ENCODE measurements at regions of chr20 and their contacts with region 1.

Region 1: DNA sequence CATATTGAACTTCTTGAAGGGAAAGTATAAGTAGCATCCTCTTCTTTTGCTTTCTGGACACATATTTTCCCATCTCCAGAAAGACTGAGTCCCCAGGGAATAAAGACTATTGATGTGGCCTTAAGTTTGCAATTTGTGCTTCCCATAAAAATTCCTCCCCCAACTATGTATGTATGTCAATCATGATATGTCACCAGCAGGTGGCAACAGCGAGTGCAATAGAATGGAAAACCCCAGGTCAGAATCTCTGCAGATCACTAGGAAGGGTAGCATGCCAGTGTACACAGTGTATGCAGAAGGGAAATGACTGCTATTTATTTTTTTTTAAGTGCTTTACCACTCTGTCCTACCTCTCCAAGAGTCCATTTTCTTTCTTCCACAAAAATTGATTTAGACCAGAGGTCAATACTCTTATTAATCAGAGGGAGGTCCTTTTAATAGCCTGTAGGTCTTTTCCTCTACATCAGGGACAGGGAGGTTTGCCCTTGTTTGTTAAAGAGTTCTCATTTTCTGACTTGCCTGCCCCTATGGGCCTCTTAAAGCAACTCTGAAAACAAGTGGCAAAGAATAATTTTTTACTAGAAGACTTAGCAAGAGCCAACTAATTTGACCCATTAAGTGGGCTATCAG is 61.4 kb downstream of the BMP2 start:
- DNase-seq: peak; percentile 15 to 65
- ATAC-seq: peak in 7 of 8 donors; percentile 43 to 85 (median 75)
- H3K4me3 ChIP-seq: no peak overlapping the region
- H3K27ac ChIP-seq: no peak overlapping the region
- H3K4me1 ChIP-seq: no peaks in the 10 kb centered on the region
- H3K27me3 ChIP-seq: no peaks in the 10 kb centered on the region
- CTCF ChIP-seq: peak; percentile 57 to 83 (median 72)

Region 2: DNA sequence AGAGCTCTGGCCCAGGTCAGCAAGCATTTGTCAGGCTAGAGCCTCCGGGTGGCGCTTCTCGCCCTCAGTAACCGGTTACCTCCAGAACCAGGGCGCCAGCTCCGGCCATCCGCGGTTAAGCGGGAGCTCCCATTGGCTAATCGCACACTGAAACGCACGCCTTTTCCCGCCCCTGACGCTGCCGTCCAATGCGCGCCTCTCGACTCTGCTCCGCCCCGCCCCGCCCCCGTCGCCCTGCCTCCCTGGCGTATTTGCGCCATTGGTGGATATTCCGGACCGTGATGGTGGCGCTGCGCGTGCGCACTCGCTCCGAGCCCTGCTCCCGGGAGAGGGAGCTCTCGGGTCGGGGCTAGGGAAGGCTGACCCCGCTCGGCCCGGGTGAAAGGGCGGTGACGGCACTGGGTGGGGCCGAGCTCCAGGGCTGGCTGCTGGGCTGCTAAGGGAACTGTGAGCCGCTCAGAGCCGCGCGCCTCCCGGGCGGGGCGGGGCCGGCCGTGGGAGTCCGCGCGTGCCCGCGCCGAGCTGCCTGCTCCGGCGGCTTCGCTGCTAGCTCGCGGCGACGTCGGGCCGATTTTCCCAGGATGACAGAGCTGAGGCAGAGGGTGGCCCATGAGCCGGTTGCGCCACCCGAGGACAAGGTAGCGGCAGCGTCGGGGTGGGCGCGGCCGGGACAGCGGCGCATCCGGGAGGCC is 1702.3 kb before region 1 on chr20 and contains the start of gene CDS2:
- intact Hi-C with region 1: no loop called
- DNase-seq: peak; percentile 100
- ATAC-seq: peak; percentile 97 to 99 (median 97)
- H3K4me3 ChIP-seq: peak within 1 kb of the TSS; percentile 83 to 98 (median 94)
- H3K27ac ChIP-seq: peak within 1 kb of the TSS; percentile 89 to 99 (median 98)
- H3K4me1 ChIP-seq: peaks cover 7 to 60% (median 48%) of the 10 kb centered on the region in 9 donors
- H3K27me3 ChIP-seq: no peaks in the 10 kb centered on the region
- CTCF ChIP-seq: peak; percentile 54 to 90 (median 71)
- total RNA-seq, gene CDS2: 67.5 to 100 (median 85.7) TPM

Region 3: DNA sequence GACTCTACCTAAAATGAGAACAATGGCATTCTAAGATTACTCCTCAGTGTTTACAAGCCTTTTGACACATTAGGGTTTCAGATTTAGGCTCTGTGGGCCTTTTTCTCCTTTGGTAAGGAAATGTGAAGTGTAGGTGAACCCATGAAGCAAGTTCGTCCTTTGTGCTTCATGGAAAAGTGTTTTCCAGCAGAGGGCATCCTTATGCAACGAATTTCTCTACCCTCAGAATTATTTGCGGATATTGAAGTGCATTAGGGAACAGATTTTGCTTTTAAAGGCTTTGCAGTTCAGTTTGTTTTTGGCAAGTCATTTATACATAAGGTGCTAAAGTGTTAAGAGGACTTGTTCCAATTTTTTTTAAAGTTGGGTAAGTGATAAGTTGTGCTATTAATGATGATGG is 650.4 kb before region 1 on chr20:
- intact Hi-C with region 1: loop called in 2 of 10 experiments (anchors 10 kb)
- DNase-seq: peak in 1 of 2 donors; percentile 8
- ATAC-seq: no peak
- H3K4me3 ChIP-seq: no peak overlapping the region
- H3K27ac ChIP-seq: no peak overlapping the region
- H3K4me1 ChIP-seq: no peaks in the 10 kb centered on the region
- H3K27me3 ChIP-seq: peaks cover 0 to 4% (median 0%) of the 10 kb centered on the region in 7 donors
- CTCF ChIP-seq: peak in 7 of 9 donors; percentile 30 to 64 (median 47)

Region 4: DNA sequence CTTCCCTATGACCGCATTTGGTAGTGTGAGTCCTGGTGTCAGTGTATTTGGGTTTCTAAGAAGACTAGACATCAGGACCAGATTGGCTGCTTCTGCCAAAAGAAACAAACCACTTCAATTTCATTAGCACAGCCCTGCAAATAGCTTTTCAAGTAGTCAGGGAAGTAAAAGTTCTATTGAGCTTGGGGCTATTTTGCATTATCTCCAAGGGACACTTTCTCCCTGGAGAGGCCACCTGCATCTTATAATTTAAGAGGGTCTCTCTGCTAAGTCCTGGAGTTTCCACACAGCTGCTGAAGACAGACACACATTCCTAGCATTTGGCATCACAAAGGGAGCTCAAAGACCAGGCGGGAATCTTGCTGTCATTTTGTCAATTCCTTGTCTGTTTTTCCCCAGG is 79.8 kb after region 1 on chr20:
- intact Hi-C with region 1: no loop called
- DNase-seq: no peak
- ATAC-seq: no peak
- H3K4me3 ChIP-seq: no peak overlapping the region
- H3K27ac ChIP-seq: no peak overlapping the region
- H3K4me1 ChIP-seq: no peaks in the 10 kb centered on the region
- H3K27me3 ChIP-seq: peaks cover 0 to 5% (median 0%) of the 10 kb centered on the region in 7 donors
- CTCF ChIP-seq: no peak

Region 5: GRCh38 chr20:7520361-7520760 is 691.5 kb after region 1 on chr20:
- intact Hi-C with region 1: no loop called
- DNase-seq: no peak
- ATAC-seq: no peak
- H3K4me3 ChIP-seq: no peak overlapping the region
- H3K27ac ChIP-seq: no peak overlapping the region
- H3K4me1 ChIP-seq: no peaks in the 10 kb centered on the region
- H3K27me3 ChIP-seq: no peaks in the 10 kb centered on the region
- CTCF ChIP-seq: no peak

Region 6: DNA sequence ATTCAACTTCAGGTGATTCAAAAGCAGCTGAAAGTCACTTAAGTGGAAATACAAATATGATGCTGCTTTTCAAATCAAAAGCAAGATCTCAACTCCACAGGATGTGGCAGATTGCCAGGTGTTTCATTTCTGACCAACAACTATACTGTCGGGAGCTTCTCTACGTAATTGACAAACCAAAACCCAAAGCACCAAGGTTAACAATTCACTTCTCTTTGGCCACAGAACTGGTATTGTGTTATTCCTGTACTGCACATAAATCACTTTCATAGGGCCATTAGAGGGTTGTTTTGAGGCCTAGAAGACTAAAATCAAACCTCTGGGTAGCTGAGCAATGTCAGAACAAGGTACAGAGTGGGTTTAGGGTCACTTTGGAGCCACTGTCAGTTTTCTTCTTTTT is 941.7 kb after region 1 on chr20:
- intact Hi-C with region 1: no loop called
- DNase-seq: peak in 1 of 2 donors; percentile 29
- ATAC-seq: peak in 1 of 8 donors; percentile 42
- H3K4me3 ChIP-seq: no peak overlapping the region
- H3K27ac ChIP-seq: peak overlapping the region in 2 of 10 donors; percentile 5 to 6
- H3K4me1 ChIP-seq: peaks cover 0 to 10% (median 0%) of the 10 kb centered on the region in 9 donors
- H3K27me3 ChIP-seq: no peaks in the 10 kb centered on the region
- CTCF ChIP-seq: no peak

Region 7: DNA sequence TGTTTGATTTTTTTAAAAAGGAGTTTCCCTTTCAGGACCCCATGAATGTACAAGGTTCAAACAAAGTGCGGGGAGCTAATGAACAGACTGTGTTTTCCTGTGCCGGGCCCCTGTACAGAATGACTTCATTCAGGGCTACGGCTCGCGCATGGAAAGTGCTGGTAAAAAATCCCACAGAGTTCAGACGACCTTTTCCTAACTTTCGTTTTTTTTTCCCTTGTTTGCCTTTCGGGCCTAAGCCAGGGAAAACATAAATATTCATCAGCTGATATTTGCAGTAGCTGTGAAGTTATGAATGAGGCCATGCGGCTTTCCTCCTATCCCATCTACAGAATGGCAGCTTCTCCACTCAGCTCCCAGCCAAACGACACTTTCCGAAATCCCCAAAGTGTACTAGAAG is 1037.4 kb after region 1 on chr20:
- intact Hi-C with region 1: loop called in 3 of 10 experiments (anchors 5 to 10 kb)
- DNase-seq: no peak
- ATAC-seq: peak in 1 of 8 donors; percentile 61
- H3K4me3 ChIP-seq: peak overlapping the region in 1 of 10 donors; percentile 18
- H3K27ac ChIP-seq: peak overlapping the region in 1 of 10 donors; percentile 38
- H3K4me1 ChIP-seq: no peaks in the 10 kb centered on the region
- H3K27me3 ChIP-seq: no peaks in the 10 kb centered on the region
- CTCF ChIP-seq: no peak